Caco-2 (cell line): ENCODE measurements at regions of chr11 and their contacts with region 1.

Region 1: GRCh38 chr11:101508370-101508769 is 75.4 kb downstream of the TRPC6 start:
- DNase-seq: no peak
- H3K4me3 ChIP-seq: no peak overlapping the region
- H3K4me3 Mint-ChIP-seq: no peak overlapping the region
- H3K27ac Mint-ChIP-seq: no peak overlapping the region
- H3K4me1 ChIP-seq: peaks cover 16% of the 10 kb centered on the region
- H3K4me1 Mint-ChIP-seq: peaks cover 9% of the 10 kb centered on the region
- H3K27me3 ChIP-seq: no peaks in the 10 kb centered on the region
- H3K27me3 Mint-ChIP-seq: no peaks in the 10 kb centered on the region
- CTCF ChIP-seq: no peak

Region 2: GRCh38 chr11:99881610-99882009 is 1626.8 kb before region 1 on chr11:
- CTCF ChIA-PET with region 1: no interaction called
- POLR2A ChIA-PET with region 1: no interaction called
- intact Hi-C with region 1: no loop called
- DNase-seq: no peak
- H3K4me3 ChIP-seq: no peak overlapping the region
- H3K4me3 Mint-ChIP-seq: no peak overlapping the region
- H3K27ac Mint-ChIP-seq: no peak overlapping the region
- H3K4me1 ChIP-seq: no peaks in the 10 kb centered on the region
- H3K4me1 Mint-ChIP-seq: no peaks in the 10 kb centered on the region
- H3K27me3 ChIP-seq: no peaks in the 10 kb centered on the region
- H3K27me3 Mint-ChIP-seq: peaks cover 10% of the 10 kb centered on the region
- CTCF ChIP-seq: no peak

Region 3: GRCh38 chr11:101478587-101479369 is 29.6 kb before region 1 on chr11:
- CTCF ChIA-PET with region 1: no interaction called
- POLR2A ChIA-PET with region 1: no interaction called
- intact Hi-C with region 1: loop called (anchors 2 kb)
- DNase-seq: peak; percentile 21 to 53
- H3K4me3 ChIP-seq: no peak overlapping the region
- H3K4me3 Mint-ChIP-seq: peak overlapping the region; percentile 25
- H3K27ac Mint-ChIP-seq: peak overlapping the region; percentile 77
- H3K4me1 ChIP-seq: peaks cover 18% of the 10 kb centered on the region
- H3K4me1 Mint-ChIP-seq: peaks cover 11% of the 10 kb centered on the region
- H3K27me3 ChIP-seq: no peaks in the 10 kb centered on the region
- H3K27me3 Mint-ChIP-seq: no peaks in the 10 kb centered on the region
- CTCF ChIP-seq: no peak

Region 4: DNA sequence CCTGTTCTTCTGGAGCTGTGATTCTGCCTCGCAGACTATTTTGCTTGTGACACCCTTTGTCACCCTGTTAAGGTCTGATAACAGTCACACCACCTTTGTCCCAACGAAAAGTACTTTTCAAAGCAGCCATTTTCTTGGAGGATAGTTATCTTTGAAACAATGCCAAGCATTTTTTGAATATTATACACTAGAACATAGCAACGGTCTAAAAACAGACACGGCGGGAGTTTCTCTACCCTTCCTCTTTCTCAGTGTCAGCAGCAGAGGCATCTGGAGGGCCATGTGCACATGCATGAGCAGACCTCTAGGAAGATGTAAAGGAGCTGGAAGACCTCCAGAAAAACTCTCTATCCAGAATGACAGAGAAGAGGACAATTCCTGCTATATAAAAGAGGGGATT is 11.1 kb before region 1 on chr11:
- CTCF ChIA-PET with region 1: no interaction called
- POLR2A ChIA-PET with region 1: no interaction called
- intact Hi-C with region 1: loop called (anchors 1 kb)
- DNase-seq: no peak
- H3K4me3 ChIP-seq: no peak overlapping the region
- H3K4me3 Mint-ChIP-seq: no peak overlapping the region
- H3K27ac Mint-ChIP-seq: no peak overlapping the region
- H3K4me1 ChIP-seq: no peaks in the 10 kb centered on the region
- H3K4me1 Mint-ChIP-seq: no peaks in the 10 kb centered on the region
- H3K27me3 ChIP-seq: no peaks in the 10 kb centered on the region; the same call in 1 of the 2 replicates
- H3K27me3 Mint-ChIP-seq: no peaks in the 10 kb centered on the region
- CTCF ChIP-seq: no peak